Head of caudate nucleus (tissue), 42 donors: ENCODE measurements at regions of chr22 and their contacts with region 1.

Region 1: GRCh38 chr22:24592851-24593558 is at the start of gene LRRC75B:
- DNase-seq: peak; percentile 33 to 87 (median 74)

Region 2: GRCh38 chr22:24445481-24446259 is 147.3 kb before region 1 on chr22:
- intact Hi-C with region 1: no loop called
- DNase-seq: peak in 10 of 42 donors; percentile 30 to 76 (median 60)

Region 3: GRCh38 chr22:24466716-24467328 is 126.2 kb before region 1 on chr22:
- intact Hi-C with region 1: no loop called
- DNase-seq: peak in 4 of 42 donors; percentile 15 to 54 (median 38)

Region 4: GRCh38 chr22:24542641-24543040 is 50.4 kb before region 1 on chr22:
- intact Hi-C with region 1: loop called (anchors 10 kb)
- DNase-seq: peak in 29 of 42 donors; percentile 16 to 75 (median 42)